CD8-positive, alpha-beta T cell (primary cell): ENCODE measurements at regions of chr17 and their contacts with region 1.

Region 1: DNA sequence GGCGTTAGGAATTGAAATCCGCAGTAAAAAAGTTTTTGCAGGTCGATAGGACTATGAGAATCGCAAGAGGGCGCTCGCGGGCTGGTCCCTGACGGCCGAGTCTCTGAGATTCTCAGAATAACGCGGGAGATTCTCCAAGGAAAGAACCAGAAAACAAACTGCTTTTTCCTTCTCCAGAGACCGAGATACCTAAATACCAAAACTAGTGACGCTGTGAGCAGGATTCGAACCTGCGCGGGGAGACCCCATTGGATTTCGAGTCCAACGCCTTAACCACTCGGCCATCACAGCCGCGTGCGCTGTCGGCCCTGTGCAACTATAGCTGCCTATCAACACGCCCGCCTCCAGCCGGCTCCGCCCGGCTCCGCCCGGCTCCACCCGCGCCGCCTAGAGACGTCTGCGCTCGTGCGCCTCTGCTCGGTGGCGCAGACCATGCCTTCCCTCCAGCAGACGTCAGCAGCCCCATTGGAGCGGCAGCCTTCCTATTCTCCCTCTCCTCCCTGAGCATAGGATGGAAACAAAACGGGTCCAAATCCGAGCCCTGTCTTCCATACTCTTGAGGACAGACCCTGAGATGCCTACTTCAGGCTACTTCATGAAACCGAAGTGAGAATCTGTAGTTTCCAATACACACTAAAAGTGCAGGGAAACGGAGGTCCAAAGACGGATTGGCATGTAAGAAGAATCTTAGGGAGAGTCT is 13.4 kb downstream of the PER1 start:
- DNase-seq: peak; percentile 92 to 98 (median 95)
- ATAC-seq: peak; percentile 84
- H3K4me3 ChIP-seq: peak overlapping the region; percentile 70 to 75
- H3K4me3 Mint-ChIP-seq: no peak overlapping the region
- H3K27ac ChIP-seq: peak overlapping the region; percentile 89 to 97
- H3K27ac Mint-ChIP-seq: no peak overlapping the region
- H3K4me1 ChIP-seq: peaks cover 18% of the 10 kb centered on the region
- H3K4me1 Mint-ChIP-seq: no peaks in the 10 kb centered on the region
- H3K27me3 ChIP-seq: no peaks in the 10 kb centered on the region
- H3K27me3 Mint-ChIP-seq: no peaks in the 10 kb centered on the region
- CTCF ChIP-seq: peak; percentile 87

Region 2: GRCh38 chr17:8041249-8041928 is 97.4 kb before region 1 on chr17:
- CTCF ChIA-PET with region 1: no interaction called
- POLR2A ChIA-PET with region 1: no interaction called
- intact Hi-C with region 1: no loop called
- DNase-seq: peak in 6 of 9 experiments; percentile 24 to 67 (median 36)
- ATAC-seq: peak; percentile 59
- H3K4me3 ChIP-seq: no peak overlapping the region
- H3K4me3 Mint-ChIP-seq: no peak overlapping the region
- H3K27ac ChIP-seq: no peak overlapping the region
- H3K27ac Mint-ChIP-seq: no peak overlapping the region
- H3K4me1 ChIP-seq: peaks cover 4% of the 10 kb centered on the region
- H3K4me1 Mint-ChIP-seq: peaks cover 2% of the 10 kb centered on the region
- H3K27me3 ChIP-seq: peaks cover 0 to 8% of the 10 kb centered on the region in 2 experiments
- H3K27me3 Mint-ChIP-seq: peaks cover 22% of the 10 kb centered on the region
- CTCF ChIP-seq: peak; percentile 59

Region 3: GRCh38 chr17:8125157-8125946 is 13.5 kb before region 1 on chr17:
- CTCF ChIA-PET with region 1: interaction called, 81 read pairs
- POLR2A ChIA-PET with region 1: interaction called, 32 read pairs
- intact Hi-C with region 1: loop called (anchors 1 kb)
- DNase-seq: peak; percentile 80 to 94 (median 88)
- ATAC-seq: peak; percentile 41
- H3K4me3 ChIP-seq: peak overlapping the region; percentile 72 to 93
- H3K4me3 Mint-ChIP-seq: peak overlapping the region; percentile 91
- H3K27ac ChIP-seq: peak overlapping the region in 1 of 2 experiments; percentile 35
- H3K27ac Mint-ChIP-seq: peak overlapping the region; percentile 95
- H3K4me1 ChIP-seq: peaks cover 53% of the 10 kb centered on the region
- H3K4me1 Mint-ChIP-seq: peaks cover 51% of the 10 kb centered on the region
- H3K27me3 ChIP-seq: peaks cover 0 to 43% of the 10 kb centered on the region in 2 experiments
- H3K27me3 Mint-ChIP-seq: peaks cover 14% of the 10 kb centered on the region
- CTCF ChIP-seq: no peak

Region 4: GRCh38 chr17:8156246-8156992 is 17.6 kb after region 1 on chr17:
- CTCF ChIA-PET with region 1: interaction called, 98 read pairs
- POLR2A ChIA-PET with region 1: interaction called, 34 read pairs
- intact Hi-C with region 1: loop called (anchors 1 kb)
- DNase-seq: peak; percentile 100
- ATAC-seq: peak; percentile 68
- H3K4me3 ChIP-seq: peak overlapping the region; percentile 82 to 90
- H3K4me3 Mint-ChIP-seq: no peak overlapping the region
- H3K27ac ChIP-seq: peak overlapping the region; percentile 100
- H3K27ac Mint-ChIP-seq: no peak overlapping the region
- H3K4me1 ChIP-seq: peaks cover 77% of the 10 kb centered on the region
- H3K4me1 Mint-ChIP-seq: peaks cover 68% of the 10 kb centered on the region
- H3K27me3 ChIP-seq: no peaks in the 10 kb centered on the region
- H3K27me3 Mint-ChIP-seq: no peaks in the 10 kb centered on the region
- CTCF ChIP-seq: no peak

Region 5: GRCh38 chr17:8204761-8205555 is 66.1 kb after region 1 on chr17:
- CTCF ChIA-PET with region 1: interaction called, 3 read pairs
- POLR2A ChIA-PET with region 1: no interaction called
- intact Hi-C with region 1: loop called in 1 of 2 experiments (anchors 1 kb)
- DNase-seq: no peak
- ATAC-seq: no peak
- H3K4me3 ChIP-seq: no peak overlapping the region
- H3K4me3 Mint-ChIP-seq: no peak overlapping the region
- H3K27ac ChIP-seq: no peak overlapping the region
- H3K27ac Mint-ChIP-seq: no peak overlapping the region
- H3K4me1 ChIP-seq: peaks cover 2% of the 10 kb centered on the region
- H3K4me1 Mint-ChIP-seq: peaks cover 7% of the 10 kb centered on the region
- H3K27me3 ChIP-seq: no peaks in the 10 kb centered on the region
- H3K27me3 Mint-ChIP-seq: no peaks in the 10 kb centered on the region
- CTCF ChIP-seq: no peak

Region 6: GRCh38 chr17:8300627-8301242 is 161.9 kb after region 1 on chr17:
- CTCF ChIA-PET with region 1: interaction called, 20 read pairs
- POLR2A ChIA-PET with region 1: interaction called, 8 read pairs
- intact Hi-C with region 1: loop called (anchors 1 kb)
- DNase-seq: peak; percentile 29 to 86 (median 63)
- ATAC-seq: peak; percentile 93
- H3K4me3 ChIP-seq: no peak overlapping the region
- H3K4me3 Mint-ChIP-seq: no peak overlapping the region
- H3K27ac ChIP-seq: no peak overlapping the region
- H3K27ac Mint-ChIP-seq: peak overlapping the region; percentile 55
- H3K4me1 ChIP-seq: peaks cover 4% of the 10 kb centered on the region
- H3K4me1 Mint-ChIP-seq: peaks cover 9% of the 10 kb centered on the region
- H3K27me3 ChIP-seq: no peaks in the 10 kb centered on the region
- H3K27me3 Mint-ChIP-seq: no peaks in the 10 kb centered on the region
- CTCF ChIP-seq: peak; percentile 76

Region 7: DNA sequence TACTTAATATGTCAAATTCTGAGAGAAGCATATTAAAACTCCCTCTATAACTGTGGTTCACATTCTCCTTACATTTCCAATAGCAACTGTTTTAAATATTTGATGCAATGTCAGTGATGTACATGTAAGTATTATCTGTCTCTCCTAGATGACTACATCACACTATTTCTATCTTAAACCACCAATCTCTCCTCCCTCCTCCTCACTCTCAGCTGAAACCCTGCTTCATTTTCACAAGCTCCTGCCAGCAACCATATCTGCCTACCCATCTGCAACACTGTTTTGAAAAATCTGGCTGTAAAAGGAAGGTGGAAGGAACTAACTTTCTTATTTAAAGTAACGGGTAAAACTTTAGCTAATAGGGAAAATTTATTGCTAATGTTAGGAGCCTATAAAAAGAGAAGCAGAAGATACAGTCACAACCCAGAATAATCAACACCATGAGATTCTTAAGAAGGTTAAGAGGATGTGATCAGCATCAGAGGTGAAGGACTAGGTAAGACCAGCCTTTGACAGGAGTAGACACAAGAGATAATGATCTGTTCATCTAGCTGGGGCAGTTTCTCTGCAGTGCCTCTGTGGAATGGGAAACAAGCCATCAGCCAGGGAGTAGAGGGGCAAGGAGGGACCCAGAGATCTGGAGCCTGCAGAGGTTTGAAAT is 460.7 kb after region 1 on chr17:
- CTCF ChIA-PET with region 1: no interaction called
- POLR2A ChIA-PET with region 1: no interaction called
- intact Hi-C with region 1: no loop called
- DNase-seq: no peak
- ATAC-seq: no peak
- H3K4me3 ChIP-seq: no peak overlapping the region
- H3K4me3 Mint-ChIP-seq: no peak overlapping the region
- H3K27ac ChIP-seq: no peak overlapping the region
- H3K27ac Mint-ChIP-seq: no peak overlapping the region
- H3K4me1 ChIP-seq: no peaks in the 10 kb centered on the region
- H3K4me1 Mint-ChIP-seq: no peaks in the 10 kb centered on the region
- H3K27me3 ChIP-seq: no peaks in the 10 kb centered on the region
- H3K27me3 Mint-ChIP-seq: peaks cover 3% of the 10 kb centered on the region
- CTCF ChIP-seq: no peak

Region 8: DNA sequence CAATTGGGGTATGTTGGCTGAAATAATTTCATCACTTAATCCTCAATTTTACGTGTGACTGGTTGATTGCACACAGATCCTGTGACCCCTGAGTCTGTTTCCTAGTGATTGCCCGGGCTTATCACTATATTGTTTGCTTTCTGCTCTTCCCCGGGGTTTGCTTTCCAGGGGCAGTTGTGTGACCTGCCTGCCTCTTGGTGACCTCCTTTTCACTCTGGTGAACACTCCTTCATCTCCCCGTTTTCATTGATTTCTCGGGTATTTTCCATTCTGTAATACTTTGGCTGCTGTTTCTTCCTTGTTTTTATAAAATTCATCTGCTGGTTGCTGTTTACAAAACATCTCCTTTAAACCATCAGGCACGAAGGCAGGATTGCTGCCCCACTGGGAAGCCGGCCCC is 918.5 kb after region 1 on chr17:
- CTCF ChIA-PET with region 1: no interaction called
- POLR2A ChIA-PET with region 1: no interaction called
- intact Hi-C with region 1: no loop called
- DNase-seq: no peak
- ATAC-seq: no peak
- H3K4me3 ChIP-seq: no peak overlapping the region
- H3K4me3 Mint-ChIP-seq: no peak overlapping the region
- H3K27ac ChIP-seq: no peak overlapping the region
- H3K27ac Mint-ChIP-seq: no peak overlapping the region
- H3K4me1 ChIP-seq: no peaks in the 10 kb centered on the region
- H3K4me1 Mint-ChIP-seq: no peaks in the 10 kb centered on the region
- H3K27me3 ChIP-seq: no peaks in the 10 kb centered on the region
- H3K27me3 Mint-ChIP-seq: peaks cover 4% of the 10 kb centered on the region
- CTCF ChIP-seq: no peak